Uterus (tissue), 4 donors: ENCODE measurements at regions of chr15 and their contacts with region 1.

Region 1: DNA sequence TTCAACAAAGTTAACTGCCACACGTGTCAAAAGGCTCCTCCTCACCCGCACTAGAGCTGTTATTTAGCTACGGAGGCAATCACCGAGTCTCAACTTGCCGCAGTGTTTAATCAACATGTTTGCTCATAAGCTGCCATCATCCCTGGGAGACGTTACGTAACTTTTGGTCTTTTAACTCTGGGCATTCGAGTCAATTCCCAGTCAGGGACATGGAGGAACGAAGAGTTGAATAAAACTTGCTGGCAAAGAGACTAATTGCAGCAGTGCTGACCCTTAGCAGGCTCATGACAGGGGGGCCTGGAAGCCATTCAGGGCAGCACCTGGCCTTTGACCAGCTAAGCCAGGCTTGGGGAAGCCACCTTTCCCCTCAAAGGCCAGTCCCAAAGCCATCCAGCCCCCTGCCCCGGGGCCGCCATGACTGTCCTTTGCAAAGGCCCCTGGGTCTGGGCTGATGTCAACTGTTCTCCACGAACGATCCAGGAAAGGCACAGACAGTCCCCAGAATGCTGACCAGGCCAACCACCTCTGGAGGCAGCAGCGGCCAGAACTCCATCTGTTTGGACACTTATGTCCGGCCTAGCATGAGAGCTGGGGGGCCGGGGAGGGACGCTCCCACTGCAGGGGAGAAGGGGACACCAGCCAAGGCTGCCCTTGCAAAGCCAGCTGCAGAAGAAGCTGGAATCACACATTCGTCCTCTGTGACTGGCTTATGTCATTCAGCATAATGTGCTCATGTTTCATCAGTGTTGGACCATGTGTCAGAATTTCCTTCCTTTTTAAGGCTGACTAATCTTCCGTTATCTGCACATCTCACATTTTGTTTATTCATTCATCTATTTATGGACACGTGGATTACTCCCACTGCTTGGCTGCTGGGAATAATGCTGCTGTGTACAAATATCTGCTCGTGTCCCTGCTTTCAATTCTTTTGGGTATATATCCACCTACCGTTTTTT is 43.7 kb downstream of the PCSK6 start:
- DNase-seq: no peak
- H3K4me3 ChIP-seq: no peak overlapping the region
- H3K27ac ChIP-seq: no peak overlapping the region
- H3K4me1 ChIP-seq: no peaks in the 10 kb centered on the region
- H3K27me3 ChIP-seq: no peaks in the 10 kb centered on the region
- CTCF ChIP-seq: no peak
- POLR2A ChIP-seq: no peak

Region 2: DNA sequence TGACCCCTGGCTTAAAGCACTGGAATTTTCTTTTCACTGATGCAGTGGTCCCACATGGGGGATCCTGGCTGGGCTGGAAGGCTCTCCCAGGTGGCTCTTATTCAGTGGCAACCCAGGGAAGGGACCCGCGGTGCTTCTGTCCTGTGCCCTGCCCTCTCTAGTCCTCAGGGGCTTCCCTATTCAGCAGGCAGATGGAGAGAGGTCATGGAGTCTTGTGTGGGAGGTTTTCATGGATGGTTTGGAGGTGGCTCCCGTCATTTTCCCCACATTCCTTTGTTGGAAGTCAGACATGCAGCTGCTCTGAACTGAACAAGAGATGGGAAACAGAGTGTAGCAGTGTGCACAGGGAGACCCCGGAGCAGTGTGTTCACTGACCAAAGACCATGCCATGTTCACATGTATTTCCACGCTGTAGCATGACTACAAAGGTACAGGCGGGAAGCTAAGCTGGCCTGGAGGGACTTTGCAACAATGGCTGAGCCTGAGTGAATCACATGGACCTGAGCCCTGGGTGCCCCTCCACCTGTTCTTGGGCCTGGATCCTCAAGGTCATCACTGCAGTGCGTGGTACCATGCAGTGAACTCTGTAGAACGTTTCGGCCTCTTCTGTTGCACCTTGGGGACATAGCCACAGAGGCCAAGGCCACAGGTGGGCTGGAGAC is 720.6 kb before region 1 on chr15:
- intact Hi-C with region 1: loop called (anchors 5 kb)
- DNase-seq: peak in 1 of 2 donors; percentile 58
- H3K4me3 ChIP-seq: no peak overlapping the region
- H3K27ac ChIP-seq: peak overlapping the region; percentile 44 to 89
- H3K4me1 ChIP-seq: peaks cover 0 to 13% of the 10 kb centered on the region in 2 donors
- H3K27me3 ChIP-seq: no peaks in the 10 kb centered on the region
- CTCF ChIP-seq: no peak
- POLR2A ChIP-seq: no peak